OCI-LY7 (cell line): ENCODE measurements at regions of chr1 and their contacts with region 1.

Region 1: DNA sequence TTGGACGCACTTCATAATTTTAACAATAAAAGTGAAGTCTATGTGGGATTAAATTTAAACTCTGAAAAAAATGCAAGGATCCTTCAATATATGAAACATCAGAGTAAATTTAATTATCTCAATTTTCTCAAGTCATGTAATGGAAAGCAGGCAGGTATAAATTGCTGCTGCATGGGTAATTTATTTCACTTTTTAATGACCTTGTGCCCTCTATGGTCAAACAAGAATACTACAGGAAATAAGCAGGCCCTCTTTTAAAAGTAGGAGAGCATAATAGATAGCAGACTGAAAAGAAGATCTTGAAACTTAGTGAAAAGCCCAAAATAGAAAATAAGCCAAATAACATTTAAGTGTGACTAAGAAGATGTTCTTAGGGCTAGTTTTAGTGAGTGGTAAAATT is 22.9 kb downstream of the BCAS2 start:
- DNase-seq: peak; percentile 57
- H3K4me3 ChIP-seq: no peak overlapping the region
- H3K27ac ChIP-seq: no peak overlapping the region
- H3K4me1 ChIP-seq: no peaks in the 10 kb centered on the region
- CTCF ChIP-seq: peak; percentile 88

Region 2: DNA sequence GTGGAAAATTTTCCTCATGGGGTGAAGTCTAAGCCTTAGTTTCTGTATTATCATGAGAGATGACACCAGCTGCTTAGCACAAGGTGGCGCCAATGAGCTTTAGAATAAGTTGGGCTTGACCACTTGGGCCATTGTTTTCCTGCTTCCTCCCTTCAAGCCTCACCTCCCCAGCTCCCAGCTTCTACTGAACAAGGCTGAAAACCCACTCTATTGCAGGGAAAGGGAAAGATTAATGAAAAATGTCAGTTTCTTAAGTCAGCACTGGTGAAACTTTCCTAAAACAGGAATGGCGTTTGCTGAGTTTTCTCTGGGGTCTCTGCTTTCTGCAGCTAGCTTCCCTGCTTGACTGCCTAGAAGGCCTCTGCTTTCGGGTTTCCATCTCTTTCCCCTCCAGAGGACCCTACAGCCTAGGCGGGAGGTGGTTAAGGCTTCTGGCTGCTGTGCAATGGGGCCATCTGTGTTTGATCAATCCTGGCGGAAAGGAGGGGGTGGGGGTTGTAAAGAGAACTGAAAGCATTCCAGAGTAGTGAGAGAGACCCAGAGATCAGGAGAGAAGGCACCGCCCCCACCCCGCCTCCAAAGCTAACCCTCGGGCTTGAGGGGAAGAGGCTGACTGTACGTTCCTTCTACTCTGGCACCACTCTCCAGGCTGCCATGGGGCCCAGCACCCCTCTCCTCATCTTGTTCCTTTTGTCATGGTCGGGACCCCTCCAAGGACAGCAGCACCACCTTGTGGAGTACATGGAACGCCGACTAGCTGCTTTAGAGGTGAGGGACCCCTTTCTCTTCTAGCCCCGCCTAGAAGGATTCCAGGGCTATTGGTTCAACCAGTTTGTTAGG is 579.5 kb before region 1 on chr1 and contains the start of gene OLFML3:
- CTCF ChIA-PET with region 1: no interaction called
- POLR2A ChIA-PET with region 1: no interaction called
- intact Hi-C with region 1: loop called (anchors 5 kb)
- DNase-seq: peak; percentile 81
- H3K4me3 ChIP-seq: no peak within 1 kb of the TSS
- H3K27ac ChIP-seq: no peak within 1 kb of the TSS
- H3K4me1 ChIP-seq: peaks cover 17% of the 10 kb centered on the region
- CTCF ChIP-seq: peak; percentile 87
- total RNA-seq, gene OLFML3: 0.21 and 0.44 TPM in 2 replicates

Region 3: GRCh38 chr1:114346480-114347029 is 212.0 kb before region 1 on chr1:
- CTCF ChIA-PET with region 1: interaction called, 5 read pairs
- POLR2A ChIA-PET with region 1: interaction called, 5 read pairs
- intact Hi-C with region 1: loop called (anchors 2 kb)
- DNase-seq: peak; percentile 93
- H3K4me3 ChIP-seq: peak overlapping the region; percentile 46
- H3K27ac ChIP-seq: no peak overlapping the region
- H3K4me1 ChIP-seq: peaks cover 5% of the 10 kb centered on the region
- CTCF ChIP-seq: peak; percentile 100

Region 4: GRCh38 chr1:114610546-114611245 is 52.2 kb after region 1 on chr1:
- CTCF ChIA-PET with region 1: no interaction called
- POLR2A ChIA-PET with region 1: interaction called, 3 read pairs
- intact Hi-C with region 1: loop called (anchors 10 kb)
- DNase-seq: no peak
- H3K4me3 ChIP-seq: no peak overlapping the region
- H3K27ac ChIP-seq: no peak overlapping the region
- H3K4me1 ChIP-seq: no peaks in the 10 kb centered on the region
- CTCF ChIP-seq: no peak